ENCODE measurements at regions of chr1 and their contacts with region 1.

Region 1: DNA sequence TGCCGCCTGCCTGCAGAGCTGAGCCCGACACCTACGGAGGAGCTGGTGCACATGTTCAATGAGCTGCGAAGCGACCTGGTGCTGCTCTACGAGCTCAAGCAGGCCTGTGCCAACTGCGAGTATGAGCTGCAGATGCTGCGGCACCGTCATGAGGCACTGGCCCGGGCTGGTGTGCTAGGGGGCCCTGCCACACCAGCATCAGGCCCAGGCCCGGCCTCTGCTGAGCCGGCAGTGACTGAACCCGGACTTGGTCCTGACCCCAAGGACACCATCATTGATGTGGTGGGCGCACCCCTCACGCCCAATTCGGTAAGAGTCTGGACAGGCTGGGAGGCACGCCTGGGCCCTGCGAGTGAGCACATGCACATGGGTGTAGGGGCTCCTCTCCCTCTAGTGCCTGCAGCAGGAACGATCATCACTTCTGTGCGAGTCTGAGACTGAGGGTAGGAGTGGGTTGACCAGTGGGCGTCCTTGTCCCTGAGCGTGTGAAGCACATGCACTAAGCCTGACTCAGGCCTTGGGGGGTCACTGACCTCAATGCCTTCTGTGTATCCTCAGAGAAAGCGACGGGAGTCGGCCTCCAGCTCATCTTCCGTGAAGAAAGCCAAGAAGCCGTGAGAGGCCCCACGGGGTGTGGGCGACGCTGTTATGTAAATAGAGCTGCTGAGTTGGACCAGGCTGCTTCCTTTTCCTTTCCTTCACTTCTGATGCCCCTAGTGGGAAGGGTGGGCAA is 6.9 kb downstream of the DMAP1 start:
- ATAC-seq: peak in 3 of 8 experiments; percentile 20 to 77 (median 47)
- H3K4me3 ChIP-seq: no peak overlapping the region
- H3K27ac ChIP-seq: no peak overlapping the region
- H3K4me1 ChIP-seq: peaks cover 51 to 54% of the 10 kb centered on the region in 2 donors

Region 2: DNA sequence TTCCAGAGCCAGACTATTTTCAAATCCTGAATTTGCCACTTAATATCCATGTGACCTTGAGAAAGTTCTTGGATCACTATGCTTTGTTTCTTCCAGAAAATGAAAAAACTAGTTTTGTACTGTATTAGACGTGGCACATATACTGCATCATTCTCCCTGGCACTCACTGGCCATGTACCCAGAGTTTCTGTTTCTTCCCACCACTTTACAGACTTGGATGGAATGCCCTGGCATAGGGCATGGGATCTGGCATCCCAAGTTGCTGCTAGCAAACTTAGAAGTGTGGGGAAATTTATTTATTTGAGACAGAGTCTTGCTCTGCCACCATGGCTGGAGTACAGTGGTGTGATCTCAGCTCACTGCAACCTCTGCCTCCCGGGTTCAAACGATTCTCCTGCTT is 88.8 kb before region 1 on chr1:
- in situ Hi-C with region 1: no loop called
- ATAC-seq: no peak
- H3K4me3 ChIP-seq: no peak overlapping the region
- H3K27ac ChIP-seq: no peak overlapping the region
- H3K4me1 ChIP-seq: no peaks in the 10 kb centered on the region

Region 3: GRCh38 chr1:44645476-44646244 is 425.5 kb after region 1 on chr1:
- in situ Hi-C with region 1: loop called in 5 of 9 experiments (anchors 5 to 25 kb)
- ATAC-seq: peak; percentile 6 to 91 (median 18)
- H3K4me3 ChIP-seq: no peak overlapping the region
- H3K27ac ChIP-seq: peak overlapping the region; percentile 16 to 23
- H3K4me1 ChIP-seq: peaks cover 56 to 69% of the 10 kb centered on the region in 2 donors

Region 4: GRCh38 chr1:44652445-44653106 is 432.4 kb after region 1 on chr1:
- in situ Hi-C with region 1: loop called in 5 of 9 experiments (anchors 5 to 25 kb)
- ATAC-seq: peak; percentile 75 to 93 (median 86)
- H3K4me3 ChIP-seq: no peak overlapping the region
- H3K27ac ChIP-seq: no peak overlapping the region
- H3K4me1 ChIP-seq: peaks cover 20 to 37% of the 10 kb centered on the region in 2 donors